ENCODE measurements at regions of chr9 and their contacts with region 1.

Region 1: GRCh38 chr9:73104342-73104741 is 47.3 kb upstream of the ANXA1 start:
- DNase-seq: no peak
- H3K4me3 ChIP-seq: no peak overlapping the region
- H3K4me3 Mint-ChIP-seq: no peak overlapping the region
- H3K27ac ChIP-seq: no peak overlapping the region
- H3K27ac Mint-ChIP-seq: no peak overlapping the region
- H3K4me1 ChIP-seq: no peaks in the 10 kb centered on the region
- H3K4me1 Mint-ChIP-seq: peaks cover 0 to 3% (median 2%) of the 10 kb centered on the region in 3 donors
- H3K27me3 ChIP-seq: no peaks in the 10 kb centered on the region
- H3K27me3 Mint-ChIP-seq: no peaks in the 10 kb centered on the region

Region 2: GRCh38 chr9:73034962-73035361 is 69.4 kb before region 1 on chr9:
- CTCF ChIA-PET with region 1: no interaction called
- POLR2A ChIA-PET with region 1: no interaction called
- DNase-seq: no peak
- H3K4me3 ChIP-seq: no peak overlapping the region
- H3K4me3 Mint-ChIP-seq: no peak overlapping the region
- H3K27ac ChIP-seq: no peak overlapping the region
- H3K27ac Mint-ChIP-seq: no peak overlapping the region
- H3K4me1 ChIP-seq: no peaks in the 10 kb centered on the region
- H3K4me1 Mint-ChIP-seq: no peaks in the 10 kb centered on the region
- H3K27me3 ChIP-seq: no peaks in the 10 kb centered on the region
- H3K27me3 Mint-ChIP-seq: peaks cover 1 to 43% of the 10 kb centered on the region in 2 donors

Region 3: DNA sequence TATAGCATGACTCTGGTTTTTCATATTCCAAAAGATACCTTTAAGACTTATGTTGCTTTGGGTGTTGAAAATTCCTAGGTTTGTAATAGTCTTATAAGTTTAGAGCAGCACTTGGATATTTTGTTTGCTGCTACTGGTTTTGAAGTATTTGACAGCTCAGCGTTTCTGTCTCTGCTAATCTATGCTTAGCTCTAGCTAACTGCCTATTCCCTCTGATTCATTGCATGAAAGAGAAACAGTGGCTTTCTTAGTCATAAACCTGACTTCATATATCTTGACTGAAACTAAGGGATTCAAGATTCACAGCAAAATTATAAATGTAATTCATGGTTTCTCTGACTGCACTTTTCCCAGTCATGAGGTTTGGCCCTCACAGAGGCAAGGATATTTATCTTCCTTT is 11.7 kb after region 1 on chr9:
- CTCF ChIA-PET with region 1: interaction called, 12 read pairs
- POLR2A ChIA-PET with region 1: no interaction called
- DNase-seq: no peak
- H3K4me3 ChIP-seq: no peak overlapping the region
- H3K4me3 Mint-ChIP-seq: peak overlapping the region in 1 of 7 donors; percentile 4
- H3K27ac ChIP-seq: no peak overlapping the region
- H3K27ac Mint-ChIP-seq: no peak overlapping the region
- H3K4me1 ChIP-seq: peaks cover 29% of the 10 kb centered on the region
- H3K4me1 Mint-ChIP-seq: peaks cover 15 to 40% (median 25%) of the 10 kb centered on the region in 3 donors
- H3K27me3 ChIP-seq: no peaks in the 10 kb centered on the region
- H3K27me3 Mint-ChIP-seq: no peaks in the 10 kb centered on the region

Region 4: DNA sequence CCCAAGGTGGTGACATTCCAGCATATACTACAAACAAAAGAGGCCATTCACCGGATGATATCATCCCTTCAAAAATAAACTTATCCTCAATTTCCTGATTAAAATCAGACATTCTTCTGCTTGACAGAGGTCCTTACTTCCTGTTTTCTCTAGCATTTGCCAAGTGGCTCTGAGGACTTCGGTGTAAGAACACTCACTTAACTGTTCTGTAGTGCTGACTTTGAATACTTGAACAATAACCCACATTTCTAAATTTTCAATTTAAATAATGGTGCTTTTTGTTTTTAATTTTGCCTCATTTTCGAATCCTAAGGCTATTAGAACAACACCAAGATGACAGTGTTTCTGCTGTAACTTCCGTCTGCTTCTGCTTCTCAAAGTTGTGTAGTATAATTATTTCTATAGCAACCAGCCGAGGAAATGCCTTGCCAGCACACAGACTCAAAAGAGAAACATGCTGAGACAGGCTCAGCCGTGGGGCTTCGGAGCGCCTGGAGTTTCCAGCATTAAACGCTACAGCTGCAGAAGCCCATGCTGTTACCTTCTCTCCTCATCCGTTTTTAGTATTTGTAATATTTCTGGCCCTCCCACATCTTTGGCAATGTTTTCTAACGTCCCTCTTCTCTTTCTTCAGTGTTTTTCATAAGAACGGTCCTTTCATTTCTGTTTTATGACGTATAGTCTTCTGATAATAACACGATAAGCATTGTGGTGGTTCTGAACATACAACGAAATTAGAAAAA is 27.9 kb after region 1 on chr9:
- CTCF ChIA-PET with region 1: interaction called, 10 read pairs
- POLR2A ChIA-PET with region 1: no interaction called
- DNase-seq: peak; percentile 50 to 87 (median 83)
- H3K4me3 ChIP-seq: peak overlapping the region; percentile 70
- H3K4me3 Mint-ChIP-seq: peak overlapping the region; percentile 83 to 91 (median 87)
- H3K27ac ChIP-seq: peak overlapping the region; percentile 89
- H3K27ac Mint-ChIP-seq: peak overlapping the region; percentile 90 to 100 (median 92)
- H3K4me1 ChIP-seq: peaks cover 8% of the 10 kb centered on the region
- H3K4me1 Mint-ChIP-seq: peaks cover 24 to 43% (median 41%) of the 10 kb centered on the region in 3 donors
- H3K27me3 ChIP-seq: no peaks in the 10 kb centered on the region
- H3K27me3 Mint-ChIP-seq: no peaks in the 10 kb centered on the region

Region 5: DNA sequence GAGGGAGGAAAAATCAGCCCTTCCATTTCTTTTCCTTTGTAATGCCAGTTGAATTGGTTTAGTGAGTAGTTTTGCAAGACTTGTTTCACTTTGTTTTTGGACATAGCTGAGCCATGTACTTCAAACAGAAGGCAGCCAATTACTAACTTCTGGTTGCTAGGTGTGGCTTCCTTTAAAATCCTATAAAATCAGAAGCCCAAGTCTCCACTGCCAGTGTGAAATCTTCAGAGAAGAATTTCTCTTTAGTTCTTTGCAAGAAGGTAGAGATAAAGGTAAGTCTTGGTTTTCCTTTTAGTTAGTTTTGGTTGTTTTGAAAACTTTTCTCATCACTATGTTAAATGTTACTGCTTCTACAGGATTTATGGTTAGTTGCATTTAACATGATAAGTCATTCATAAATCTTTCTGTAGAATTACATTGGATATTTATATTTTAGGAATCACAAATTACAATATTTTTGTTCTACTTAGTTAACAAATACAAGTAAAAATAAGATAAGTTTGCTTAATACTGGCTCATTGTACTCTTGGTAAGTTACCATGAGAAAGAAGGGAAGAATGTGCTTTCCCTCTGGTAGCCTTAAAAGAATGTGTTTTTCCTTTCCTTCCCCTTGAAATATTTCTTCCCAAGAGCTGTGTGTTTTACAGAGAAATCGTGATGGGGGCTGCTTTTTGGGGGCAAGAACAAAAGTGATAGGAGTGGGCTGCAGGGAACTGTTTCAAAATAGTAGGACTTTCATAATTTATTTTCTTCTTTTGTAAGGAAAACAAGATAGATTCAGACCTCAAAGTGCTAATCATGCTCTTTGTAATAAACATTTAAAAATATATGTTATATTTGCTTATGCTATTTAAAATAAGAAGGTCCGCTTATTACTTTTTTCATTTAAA is 47.6 kb after region 1 on chr9 and contains the start of gene ANXA1:
- CTCF ChIA-PET with region 1: interaction called, 13 read pairs
- POLR2A ChIA-PET with region 1: interaction called, 3 read pairs
- DNase-seq: peak in 3 of 5 donors; percentile 58 to 75 (median 59)
- H3K4me3 ChIP-seq: peak within 1 kb of the TSS; percentile 79
- H3K4me3 Mint-ChIP-seq: peak within 1 kb of the TSS; percentile 92 to 99 (median 93)
- H3K27ac ChIP-seq: peak within 1 kb of the TSS; percentile 93
- H3K27ac Mint-ChIP-seq: peak within 1 kb of the TSS; percentile 79 to 99 (median 98)
- H3K4me1 ChIP-seq: peaks cover 61% of the 10 kb centered on the region
- H3K4me1 Mint-ChIP-seq: peaks cover 61 to 73% (median 70%) of the 10 kb centered on the region in 3 donors
- H3K27me3 ChIP-seq: no peaks in the 10 kb centered on the region
- H3K27me3 Mint-ChIP-seq: no peaks in the 10 kb centered on the region
- total RNA-seq, gene ANXA1: 87.7 to 93.2 TPM

Region 6: DNA sequence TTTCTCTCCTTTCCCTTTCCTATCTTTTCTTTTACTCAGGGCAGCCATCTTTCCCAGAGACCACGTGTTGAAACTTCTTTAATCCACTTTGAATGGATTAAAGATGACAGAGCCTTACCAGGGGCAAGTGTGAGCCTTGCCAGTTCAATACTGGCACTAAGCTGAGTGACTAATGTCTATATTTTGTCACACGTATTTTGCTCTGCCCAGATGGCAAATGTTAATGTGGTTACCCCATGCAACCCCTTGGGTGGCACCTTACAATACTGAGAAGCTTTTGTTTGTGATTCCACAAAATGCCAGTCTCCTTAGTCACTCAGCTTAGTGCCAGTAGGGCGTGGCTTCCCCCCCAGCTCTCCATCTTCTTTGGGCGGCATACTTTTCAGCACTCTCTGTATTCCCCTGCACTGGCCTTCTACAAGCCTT is 72.1 kb after region 1 on chr9:
- CTCF ChIA-PET with region 1: interaction called, 44 read pairs
- POLR2A ChIA-PET with region 1: no interaction called
- DNase-seq: no peak
- H3K4me3 ChIP-seq: no peak overlapping the region
- H3K4me3 Mint-ChIP-seq: no peak overlapping the region
- H3K27ac ChIP-seq: no peak overlapping the region
- H3K27ac Mint-ChIP-seq: no peak overlapping the region
- H3K4me1 ChIP-seq: no peaks in the 10 kb centered on the region
- H3K4me1 Mint-ChIP-seq: peaks cover 0 to 6% (median 1%) of the 10 kb centered on the region in 3 donors
- H3K27me3 ChIP-seq: no peaks in the 10 kb centered on the region
- H3K27me3 Mint-ChIP-seq: no peaks in the 10 kb centered on the region

Region 7: GRCh38 chr9:73183917-73184861 is 79.8 kb after region 1 on chr9:
- CTCF ChIA-PET with region 1: interaction called, 44 read pairs
- POLR2A ChIA-PET with region 1: no interaction called
- DNase-seq: peak in 2 of 5 donors; percentile 44 to 48
- H3K4me3 ChIP-seq: no peak overlapping the region
- H3K4me3 Mint-ChIP-seq: no peak overlapping the region
- H3K27ac ChIP-seq: no peak overlapping the region
- H3K27ac Mint-ChIP-seq: no peak overlapping the region
- H3K4me1 ChIP-seq: no peaks in the 10 kb centered on the region
- H3K4me1 Mint-ChIP-seq: no peaks in the 10 kb centered on the region
- H3K27me3 ChIP-seq: no peaks in the 10 kb centered on the region
- H3K27me3 Mint-ChIP-seq: peaks cover 10 to 31% of the 10 kb centered on the region in 2 donors

Region 8: DNA sequence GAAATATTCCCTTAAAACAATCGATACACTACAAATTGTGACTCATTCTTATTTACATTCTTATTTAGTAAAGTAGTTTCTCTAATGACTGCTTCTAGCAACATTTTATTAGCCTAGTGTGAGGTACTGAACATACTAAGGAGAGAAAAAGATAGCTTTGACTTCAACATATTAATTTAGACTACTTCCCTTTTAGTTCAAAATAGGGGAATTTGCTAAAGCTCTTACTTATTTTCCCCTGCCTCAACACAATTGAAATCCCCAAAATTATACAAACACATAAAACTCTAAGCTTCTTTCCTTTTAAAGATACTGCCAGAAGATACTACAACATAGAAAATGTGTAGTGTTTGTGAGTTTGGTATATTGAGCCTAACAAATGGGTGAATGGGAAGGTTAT is 102.5 kb after region 1 on chr9:
- CTCF ChIA-PET with region 1: no interaction called
- POLR2A ChIA-PET with region 1: no interaction called
- DNase-seq: no peak
- H3K4me3 ChIP-seq: no peak overlapping the region
- H3K4me3 Mint-ChIP-seq: no peak overlapping the region
- H3K27ac ChIP-seq: no peak overlapping the region
- H3K27ac Mint-ChIP-seq: no peak overlapping the region
- H3K4me1 ChIP-seq: no peaks in the 10 kb centered on the region
- H3K4me1 Mint-ChIP-seq: no peaks in the 10 kb centered on the region
- H3K27me3 ChIP-seq: no peaks in the 10 kb centered on the region
- H3K27me3 Mint-ChIP-seq: peaks cover 0 to 1% of the 10 kb centered on the region in 2 donors

Region 9: GRCh38 chr9:73269430-73270101 is 165.2 kb after region 1 on chr9:
- CTCF ChIA-PET with region 1: no interaction called
- POLR2A ChIA-PET with region 1: no interaction called
- DNase-seq: no peak
- H3K4me3 ChIP-seq: no peak overlapping the region
- H3K4me3 Mint-ChIP-seq: no peak overlapping the region
- H3K27ac ChIP-seq: no peak overlapping the region
- H3K27ac Mint-ChIP-seq: no peak overlapping the region
- H3K4me1 ChIP-seq: no peaks in the 10 kb centered on the region
- H3K4me1 Mint-ChIP-seq: no peaks in the 10 kb centered on the region
- H3K27me3 ChIP-seq: no peaks in the 10 kb centered on the region
- H3K27me3 Mint-ChIP-seq: peaks cover 0 to 1% of the 10 kb centered on the region in 2 donors